Posterior cingulate gyrus (tissue), 11 donors: ENCODE measurements at regions of chr14 and their contacts with region 1.

Region 1: DNA sequence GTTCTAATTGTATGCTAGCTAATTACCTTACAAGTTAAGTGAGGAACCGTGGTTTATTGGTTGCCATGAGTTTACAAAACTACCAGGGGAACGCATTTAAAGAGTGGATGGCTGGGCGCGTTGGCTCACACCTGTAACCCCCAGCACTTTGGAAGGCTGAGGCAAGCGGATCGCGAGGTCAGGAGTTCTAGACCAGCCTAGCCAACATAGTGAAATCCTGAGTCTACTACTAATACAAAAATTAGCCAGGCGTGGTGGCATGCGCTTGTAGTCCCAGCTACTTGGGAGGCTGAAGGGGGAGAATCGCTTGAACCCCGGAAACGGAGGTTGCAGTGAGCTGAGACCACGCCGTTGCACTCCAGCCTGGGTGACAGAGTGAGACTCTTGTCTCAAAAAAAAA is 2.2 kb downstream of the EIF5 start:
- DNase-seq: peak in 1 of 10 donors; percentile 15

Region 2: GRCh38 chr14:103385152-103385993 is 49.2 kb after region 1 on chr14 and contains the start of gene MARK3:
- intact Hi-C with region 1: loop called (anchors 1 kb)
- DNase-seq: peak; percentile 97 to 100 (median 98)